ENCODE measurements at regions of chr7 and their contacts with region 1.

Region 1: DNA sequence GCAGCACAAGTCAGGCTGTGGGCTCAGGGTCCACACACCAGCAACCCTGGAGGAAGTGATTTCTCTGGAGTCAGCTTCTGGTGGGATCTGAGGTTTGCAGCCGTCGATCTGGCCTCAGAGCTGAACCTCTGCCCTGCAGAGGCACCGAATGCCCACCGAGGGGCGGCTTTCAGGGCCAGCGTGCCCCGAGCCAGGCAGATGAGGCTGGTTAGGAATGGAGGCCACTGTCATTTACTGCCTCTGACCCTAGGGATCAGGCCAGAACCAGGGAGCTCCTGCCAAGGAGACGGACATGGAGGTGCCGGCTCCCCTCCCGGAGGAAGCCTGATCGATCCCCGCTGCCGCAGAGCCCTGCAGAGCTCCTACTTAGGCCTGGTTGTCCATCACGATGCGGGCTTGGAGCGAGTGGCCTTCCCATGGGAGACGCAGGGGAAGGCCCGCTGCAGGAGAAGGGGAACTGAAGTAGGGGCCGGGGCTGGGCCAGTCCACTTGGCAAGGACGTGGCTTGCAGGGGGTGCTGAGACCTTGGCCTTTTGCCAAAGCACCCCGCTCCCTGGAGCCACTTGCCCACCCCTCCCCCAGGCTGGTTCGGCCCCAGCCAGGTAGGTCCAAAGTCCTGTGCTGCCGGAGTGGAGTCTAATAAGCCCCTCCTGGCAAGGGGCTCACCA is 19.6 kb upstream of the ELFN1 start:
- DNase-seq: no peak
- H3K4me3 ChIP-seq: no peak overlapping the region
- H3K27ac ChIP-seq: no peak overlapping the region
- H3K4me1 ChIP-seq: no peaks in the 10 kb centered on the region
- H3K27me3 ChIP-seq: peaks cover 0 to 45% of the 10 kb centered on the region in 2 donors
- CTCF ChIP-seq: no peak
- POLR2A ChIP-seq: no peak

Region 2: GRCh38 chr7:2261611-2262010 is 611.1 kb after region 1 on chr7:
- intact Hi-C with region 1: loop called (anchors 5 kb)
- DNase-seq: no peak
- H3K4me3 ChIP-seq: no peak overlapping the region
- H3K27ac ChIP-seq: peak overlapping the region in 1 of 2 donors; percentile 14
- H3K4me1 ChIP-seq: no peaks in the 10 kb centered on the region
- H3K27me3 ChIP-seq: no peaks in the 10 kb centered on the region
- CTCF ChIP-seq: no peak
- POLR2A ChIP-seq: no peak

Measured in breast epithelium (tissue), 4 donors.